GM18951 (cell line): ENCODE measurements at regions of chr9 and their contacts with region 1.

Region 1: DNA sequence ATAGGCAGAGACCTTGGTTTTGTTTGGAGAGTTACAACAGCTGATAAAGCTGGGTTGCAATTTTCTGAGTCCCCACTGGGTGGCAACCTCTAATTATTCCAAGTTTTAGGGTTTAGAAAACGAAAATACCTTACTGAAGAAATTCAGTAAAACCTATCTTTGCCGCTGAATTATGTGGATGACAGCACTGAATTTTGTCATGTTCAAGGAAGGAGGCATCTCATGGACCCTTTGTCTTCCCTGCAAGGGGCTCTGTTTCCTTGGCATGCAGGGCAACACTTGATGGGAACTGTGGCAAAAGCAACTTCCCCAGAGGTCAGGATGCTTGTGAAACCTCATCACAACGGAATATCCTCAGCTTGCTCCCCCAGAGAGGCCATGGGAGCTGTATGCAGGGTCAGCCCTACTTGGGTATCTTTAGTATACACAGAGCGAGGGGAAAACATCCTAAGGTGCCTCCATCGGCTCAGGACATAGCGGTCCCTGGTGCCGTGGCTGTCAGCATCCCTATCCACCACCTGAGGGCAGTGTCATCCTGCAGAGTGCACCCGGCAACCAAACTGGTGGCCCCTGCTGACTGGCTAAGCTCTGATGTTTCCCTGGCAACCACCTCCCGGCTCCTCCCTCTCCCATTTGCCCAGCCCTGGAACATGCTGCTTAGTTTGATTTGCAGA is 123.1 kb downstream of the RXRA start:
- POLR2A ChIP-seq: no peak

Region 2: GRCh38 chr9:134165357-134166310 is 283.7 kb before region 1 on chr9:
- in situ Hi-C with region 1: loop called (anchors 5 kb)
- POLR2A ChIP-seq: no peak

Region 3: DNA sequence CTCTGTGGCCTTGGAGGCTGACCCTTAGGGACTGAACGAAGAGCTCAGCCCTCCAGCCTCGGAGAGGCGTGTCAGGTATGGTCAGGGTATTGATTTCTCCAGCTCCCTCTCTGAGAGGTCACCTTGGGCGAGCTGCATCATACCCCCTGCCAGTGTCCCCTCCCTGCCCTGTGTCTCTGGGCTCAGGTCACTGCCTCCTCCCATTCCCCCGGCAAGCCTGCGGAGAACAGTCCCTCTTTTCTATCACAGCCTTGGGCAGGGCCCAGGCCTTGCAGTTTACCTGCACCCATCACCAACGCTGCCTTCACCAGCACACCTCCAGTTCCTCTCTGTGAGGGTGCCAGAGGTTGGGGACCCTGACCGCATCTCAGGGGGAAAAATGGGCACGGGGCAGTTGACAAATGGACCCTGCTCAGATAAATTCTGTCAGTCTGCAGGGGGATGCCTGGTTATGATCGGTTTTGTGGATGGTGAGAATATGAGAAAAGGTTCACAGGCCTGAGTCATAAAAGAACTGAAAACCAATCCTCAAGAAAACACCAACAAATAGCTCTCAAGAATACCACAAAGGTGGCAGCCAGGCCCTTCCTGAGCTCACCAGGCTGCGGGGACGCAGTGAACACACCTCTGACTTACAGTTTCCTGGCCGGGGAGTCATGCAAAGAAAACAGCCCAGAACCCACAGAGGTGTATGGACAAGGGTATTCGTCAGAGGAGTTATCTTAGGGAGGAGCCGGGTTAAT is 147.8 kb before region 1 on chr9:
- in situ Hi-C with region 1: no loop called
- POLR2A ChIP-seq: no peak

Region 4: DNA sequence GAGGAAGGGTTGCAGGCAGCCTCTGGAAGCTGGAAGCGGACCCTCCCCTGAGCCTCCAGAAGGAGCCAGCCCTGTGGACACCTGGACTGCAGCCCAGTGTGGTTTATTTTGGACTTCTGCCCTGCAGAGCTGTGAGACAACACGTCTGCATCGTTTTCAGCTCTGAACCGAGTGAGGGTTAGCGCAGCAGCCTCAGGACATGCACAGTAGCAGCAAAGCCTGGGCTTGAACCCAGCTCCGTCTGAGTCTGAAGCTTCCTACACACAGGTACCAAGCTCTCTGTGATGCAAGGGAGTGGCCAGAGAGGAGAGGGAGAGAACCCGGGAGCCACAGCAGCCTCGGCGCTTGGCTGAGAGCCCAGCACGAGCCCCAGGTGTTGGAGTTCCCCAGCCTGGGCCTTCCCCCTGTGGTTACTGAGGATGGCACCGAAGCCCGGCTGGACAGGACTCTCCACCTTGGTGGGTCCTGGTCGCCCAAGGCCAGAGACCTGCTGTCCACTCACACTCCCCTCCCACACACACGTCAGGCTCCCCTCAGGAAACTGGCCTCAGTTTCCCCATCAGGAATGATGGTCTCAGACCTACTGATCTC is 766.3 kb after region 1 on chr9:
- in situ Hi-C with region 1: no loop called
- POLR2A ChIP-seq: no peak